WTC11 (cell line): ENCODE measurements at regions of chr7 and their contacts with region 1.

Region 1: GRCh38 chr7:73522105-73522872 is at the start of gene BAZ1B:
- DNase-seq: peak; percentile 99
- ATAC-seq: peak; percentile 95
- H3K4me3 Mint-ChIP-seq: peak within 1 kb of the TSS; percentile 83
- H3K27ac Mint-ChIP-seq: peak within 1 kb of the TSS; percentile 98
- H3K4me1 Mint-ChIP-seq: peaks cover 36% of the 10 kb centered on the region
- H3K27me3 Mint-ChIP-seq: no peaks in the 10 kb centered on the region
- CTCF ChIP-seq: no peak
- total RNA-seq, gene BAZ1B: 64.9 to 66.5 TPM (median 66.3 TPM) in 3 replicates

Region 2: GRCh38 chr7:73308665-73309214 is 213.5 kb before region 1 on chr7 and contains the start of gene NSUN5:
- CTCF ChIA-PET with region 1: no interaction called
- POLR2A ChIA-PET with region 1: no interaction called
- DNase-seq: peak; percentile 89
- ATAC-seq: peak; percentile 79
- H3K4me3 Mint-ChIP-seq: peak within 1 kb of the TSS; percentile 93
- H3K27ac Mint-ChIP-seq: peak within 1 kb of the TSS; percentile 88
- H3K4me1 Mint-ChIP-seq: peaks cover 8% of the 10 kb centered on the region
- H3K27me3 Mint-ChIP-seq: peaks cover 16% of the 10 kb centered on the region
- CTCF ChIP-seq: no peak
- total RNA-seq, gene NSUN5: 57.0 to 62.2 TPM (median 62.2 TPM) in 3 replicates

Region 3: GRCh38 chr7:73504017-73504416 is 18.3 kb before region 1 on chr7:
- CTCF ChIA-PET with region 1: no interaction called
- POLR2A ChIA-PET with region 1: interaction called, 14 read pairs
- DNase-seq: no peak
- ATAC-seq: no peak
- H3K4me3 Mint-ChIP-seq: no peak overlapping the region
- H3K27ac Mint-ChIP-seq: no peak overlapping the region
- H3K4me1 Mint-ChIP-seq: no peaks in the 10 kb centered on the region
- H3K27me3 Mint-ChIP-seq: no peaks in the 10 kb centered on the region
- CTCF ChIP-seq: no peak

Region 4: DNA sequence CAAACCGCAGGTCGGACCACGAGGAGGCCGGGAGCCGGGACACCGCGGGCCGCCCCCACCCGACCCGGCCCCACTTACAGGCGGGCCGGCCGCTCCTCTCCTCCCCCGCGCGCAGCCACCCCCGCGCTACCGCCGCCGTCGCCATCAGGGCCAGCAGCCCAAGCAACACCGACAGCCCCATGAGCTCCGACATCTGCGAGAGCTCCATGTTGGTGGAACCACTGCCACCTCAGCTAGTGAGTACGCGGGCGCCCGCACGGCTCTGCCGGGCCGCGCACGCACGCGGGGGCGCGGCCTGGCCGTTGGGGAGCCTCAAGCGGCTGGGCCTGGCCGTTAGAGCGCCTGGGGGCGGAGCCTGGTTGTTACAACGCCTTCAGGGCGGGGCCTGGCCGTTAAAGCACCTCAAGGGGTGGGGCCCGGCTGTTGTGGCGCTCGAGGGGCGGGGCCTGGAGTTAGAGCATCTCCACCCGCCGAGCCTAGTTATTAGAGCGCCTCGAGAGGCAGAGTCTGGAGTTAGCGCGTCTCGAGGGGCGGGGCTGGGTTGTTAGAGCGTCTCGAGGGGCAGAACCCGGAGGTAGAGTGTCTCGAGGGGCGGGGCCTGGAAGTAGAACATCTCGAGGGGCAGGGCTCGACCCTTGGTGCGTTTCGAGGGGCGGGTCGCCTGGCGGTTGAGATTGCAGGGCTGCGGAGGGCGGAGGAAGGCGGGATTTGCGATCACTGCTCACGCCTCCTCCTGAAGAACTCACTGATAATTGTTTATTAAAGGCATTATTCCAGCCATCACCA is 56.2 kb after region 1 on chr7 and contains the start of gene TBL2:
- CTCF ChIA-PET with region 1: interaction called, 5 read pairs
- POLR2A ChIA-PET with region 1: interaction called, 12 read pairs
- DNase-seq: peak; percentile 99
- ATAC-seq: peak; percentile 93
- H3K4me3 Mint-ChIP-seq: peak within 1 kb of the TSS; percentile 86
- H3K27ac Mint-ChIP-seq: peak within 1 kb of the TSS; percentile 94
- H3K4me1 Mint-ChIP-seq: peaks cover 16% of the 10 kb centered on the region
- H3K27me3 Mint-ChIP-seq: peaks cover 45% of the 10 kb centered on the region
- CTCF ChIP-seq: no peak
- total RNA-seq, gene TBL2: 28.6 to 32.3 TPM (median 29.0 TPM) in 3 replicates